ENCODE measurements at regions of chr3 and their contacts with region 1.

Region 1: GRCh38 chr3:94423578-94423977 is 360.7 kb downstream of the NSUN3 start:
- DNase-seq: no peak
- H3K4me3 ChIP-seq: no peak overlapping the region
- H3K27ac ChIP-seq: no peak overlapping the region
- H3K4me1 ChIP-seq: no peaks in the 10 kb centered on the region
- H3K27me3 ChIP-seq: no peaks in the 10 kb centered on the region
- CTCF ChIP-seq: no peak

Region 2: GRCh38 chr3:94349310-94349878 is 74.2 kb before region 1 on chr3:
- intact Hi-C with region 1: no loop called
- DNase-seq: no peak
- H3K4me3 ChIP-seq: no peak overlapping the region
- H3K27ac ChIP-seq: no peak overlapping the region
- H3K4me1 ChIP-seq: no peaks in the 10 kb centered on the region
- H3K27me3 ChIP-seq: no peaks in the 10 kb centered on the region
- CTCF ChIP-seq: no peak

Region 3: GRCh38 chr3:94481226-94481898 is 57.8 kb after region 1 on chr3:
- intact Hi-C with region 1: loop called (anchors 10 kb)
- DNase-seq: no peak
- H3K4me3 ChIP-seq: no peak overlapping the region
- H3K27ac ChIP-seq: no peak overlapping the region
- H3K4me1 ChIP-seq: no peaks in the 10 kb centered on the region
- H3K27me3 ChIP-seq: no peaks in the 10 kb centered on the region
- CTCF ChIP-seq: no peak